H1 (cell line): ENCODE measurements at regions of chr22 and their contacts with region 1.

Region 1: DNA sequence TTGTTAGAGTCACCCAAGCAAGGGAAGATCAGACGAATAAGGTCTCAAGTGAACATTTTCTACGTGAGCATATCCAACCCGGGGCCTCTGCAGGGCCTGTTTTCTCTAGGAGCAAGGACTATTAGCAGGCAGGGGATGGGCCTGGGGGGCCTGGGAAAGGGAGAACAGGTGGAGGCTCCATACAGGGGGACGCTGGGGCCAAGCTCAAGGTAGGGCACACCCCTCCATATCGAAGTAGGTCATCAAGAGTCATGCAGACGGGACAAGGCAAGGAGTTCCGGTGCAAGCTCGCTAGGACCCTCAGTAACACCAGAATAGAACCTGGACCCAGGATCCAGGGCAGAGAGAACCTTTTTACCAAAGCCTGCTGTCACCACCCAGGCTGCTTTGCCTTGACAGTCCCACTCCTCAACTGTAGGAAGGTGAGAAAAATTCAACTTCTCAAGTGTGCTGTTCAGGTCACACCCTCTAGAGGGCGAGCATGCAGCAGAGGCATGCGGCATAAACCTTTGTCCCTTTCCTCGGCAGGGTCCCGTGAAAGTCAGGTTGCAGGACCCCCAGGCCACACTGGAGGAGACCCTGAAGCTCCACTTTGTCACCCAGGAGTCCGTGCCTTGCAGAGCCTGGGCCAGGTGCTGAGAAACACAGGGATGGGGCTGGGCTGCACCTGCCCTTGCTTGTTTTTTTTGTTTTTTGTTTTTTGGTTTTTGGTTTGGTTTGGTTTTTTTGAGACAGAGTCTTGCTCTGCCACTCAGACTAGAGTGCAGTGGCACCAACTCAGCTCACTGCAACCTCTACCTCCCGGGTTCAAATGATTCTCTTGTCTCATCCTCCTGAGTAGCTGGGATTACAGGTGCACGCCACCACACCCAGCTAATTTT is 8.6 kb upstream of the APOBEC3B start:
- DNase-seq: peak; percentile 25 to 80
- H3K4me3 ChIP-seq: no peak overlapping the region
- H3K27ac ChIP-seq: no peak overlapping the region
- H3K4me1 ChIP-seq: peaks cover 0 to 4% (median under 1%) of the 10 kb centered on the region in 4 experiments; a peak in 2 of 7 replicates
- H3K27me3 ChIP-seq: no peaks in the 10 kb centered on the region; a peak in 2 of 7 replicates
- CTCF ChIP-seq: peak; percentile 89 to 98 (median 89)
- EP300 ChIP-seq: no peak
- POLR2A ChIP-seq: no peak
- RAD21 ChIP-seq: peak; percentile 85 to 86

Region 2: GRCh38 chr22:38996105-38996504 is 22.6 kb after region 1 on chr22:
- CTCF ChIA-PET with region 1: interaction called, 14 read pairs
- POLR2A ChIA-PET with region 1: interaction called, 3 read pairs
- DNase-seq: no peak
- H3K4me3 ChIP-seq: no peak overlapping the region
- H3K27ac ChIP-seq: no peak overlapping the region
- H3K4me1 ChIP-seq: peaks cover 3 to 19% (median 4%) of the 10 kb centered on the region in 4 experiments; a peak in 6 of 7 replicates
- H3K27me3 ChIP-seq: no peaks in the 10 kb centered on the region; a peak in 1 of 7 replicates
- CTCF ChIP-seq: no peak
- EP300 ChIP-seq: no peak
- POLR2A ChIP-seq: no peak
- RAD21 ChIP-seq: no peak